Right lobe of liver (tissue), 6 donors: ENCODE measurements at regions of chr7 and their contacts with region 1.

Region 1: DNA sequence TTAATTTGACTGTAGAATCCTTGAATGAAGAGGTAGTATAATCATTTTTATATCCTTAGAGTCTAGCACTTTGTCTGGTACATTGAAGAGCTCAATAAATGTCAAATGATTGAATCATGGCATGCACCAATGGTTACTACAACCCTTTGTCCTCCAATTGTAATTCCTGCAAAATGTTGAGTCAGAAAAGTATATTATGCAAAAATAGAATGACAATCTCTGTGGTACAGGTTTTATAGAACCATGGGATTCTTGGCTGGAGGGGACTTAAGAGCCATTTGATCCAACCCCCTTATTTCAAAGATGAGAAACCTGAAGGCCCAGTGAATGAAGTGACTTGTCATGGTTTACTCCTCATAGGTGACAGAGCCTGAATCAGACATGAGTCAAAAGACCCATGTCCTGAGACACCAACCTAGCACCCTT is 30.9 kb upstream of the SMKR1 start:
- DNase-seq: no peak
- ATAC-seq: no peak
- H3K4me3 ChIP-seq: no peak overlapping the region
- H3K27ac ChIP-seq: no peak overlapping the region
- H3K4me1 ChIP-seq: no peaks in the 10 kb centered on the region
- H3K27me3 ChIP-seq: no peaks in the 10 kb centered on the region
- CTCF ChIP-seq: no peak
- POLR2A ChIP-seq: no peak

Region 2: GRCh38 chr7:129224251-129225205 is 246.9 kb before region 1 on chr7 and contains the start of gene AHCYL2:
- intact Hi-C with region 1: no loop called
- DNase-seq: peak; percentile 99
- ATAC-seq: peak; percentile 95 to 99 (median 96)
- H3K4me3 ChIP-seq: peak within 1 kb of the TSS; percentile 72 to 97 (median 83)
- H3K27ac ChIP-seq: peak within 1 kb of the TSS; percentile 85 to 96 (median 94)
- H3K4me1 ChIP-seq: peaks cover 0 to 12% (median 6%) of the 10 kb centered on the region in 4 donors
- H3K27me3 ChIP-seq: no peaks in the 10 kb centered on the region
- CTCF ChIP-seq: no peak
- POLR2A ChIP-seq: peak; percentile 60
- total RNA-seq, gene AHCYL2: 6.1 to 9.3 (median 8.0) TPM

Region 3: GRCh38 chr7:129367700-129368388 is 103.6 kb before region 1 on chr7:
- intact Hi-C with region 1: loop called (anchors 5 kb)
- DNase-seq: peak; percentile 67 to 75 (median 70)
- ATAC-seq: peak; percentile 95 to 99 (median 97)
- H3K4me3 ChIP-seq: no peak overlapping the region
- H3K27ac ChIP-seq: no peak overlapping the region
- H3K4me1 ChIP-seq: no peaks in the 10 kb centered on the region
- H3K27me3 ChIP-seq: no peaks in the 10 kb centered on the region
- CTCF ChIP-seq: peak; percentile 78 to 89 (median 84)
- POLR2A ChIP-seq: no peak